Caco-2 (cell line): ENCODE measurements at regions of chr13 and their contacts with region 1.

Region 1: DNA sequence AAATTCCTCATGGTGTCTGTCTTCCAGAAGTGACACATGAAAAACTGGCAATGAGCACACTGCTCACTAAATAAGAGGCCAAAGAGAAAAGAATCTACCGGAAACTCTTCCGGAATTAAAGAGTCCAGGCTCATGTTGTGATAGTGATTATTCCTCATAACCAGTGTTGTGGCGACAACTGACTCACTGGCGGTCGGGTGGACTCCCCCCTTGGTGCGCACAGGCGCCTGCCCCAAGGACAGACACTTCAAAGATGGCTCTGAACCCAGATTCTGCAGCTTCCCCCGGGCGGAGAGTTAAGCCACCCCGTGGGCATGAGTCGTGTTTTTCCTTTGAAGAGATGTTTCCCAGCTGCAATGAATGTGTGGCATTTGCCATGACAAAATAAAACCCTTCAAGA is 10.3 kb downstream of the IL17D start:
- DNase-seq: no peak
- H3K4me3 ChIP-seq: no peak overlapping the region
- H3K4me3 Mint-ChIP-seq: no peak overlapping the region
- H3K27ac Mint-ChIP-seq: no peak overlapping the region
- H3K4me1 ChIP-seq: peaks cover 8% of the 10 kb centered on the region; the same call in 1 of the 2 replicates
- H3K4me1 Mint-ChIP-seq: no peaks in the 10 kb centered on the region
- H3K27me3 ChIP-seq: no peaks in the 10 kb centered on the region
- H3K27me3 Mint-ChIP-seq: no peaks in the 10 kb centered on the region
- CTCF ChIP-seq: no peak

Region 2: DNA sequence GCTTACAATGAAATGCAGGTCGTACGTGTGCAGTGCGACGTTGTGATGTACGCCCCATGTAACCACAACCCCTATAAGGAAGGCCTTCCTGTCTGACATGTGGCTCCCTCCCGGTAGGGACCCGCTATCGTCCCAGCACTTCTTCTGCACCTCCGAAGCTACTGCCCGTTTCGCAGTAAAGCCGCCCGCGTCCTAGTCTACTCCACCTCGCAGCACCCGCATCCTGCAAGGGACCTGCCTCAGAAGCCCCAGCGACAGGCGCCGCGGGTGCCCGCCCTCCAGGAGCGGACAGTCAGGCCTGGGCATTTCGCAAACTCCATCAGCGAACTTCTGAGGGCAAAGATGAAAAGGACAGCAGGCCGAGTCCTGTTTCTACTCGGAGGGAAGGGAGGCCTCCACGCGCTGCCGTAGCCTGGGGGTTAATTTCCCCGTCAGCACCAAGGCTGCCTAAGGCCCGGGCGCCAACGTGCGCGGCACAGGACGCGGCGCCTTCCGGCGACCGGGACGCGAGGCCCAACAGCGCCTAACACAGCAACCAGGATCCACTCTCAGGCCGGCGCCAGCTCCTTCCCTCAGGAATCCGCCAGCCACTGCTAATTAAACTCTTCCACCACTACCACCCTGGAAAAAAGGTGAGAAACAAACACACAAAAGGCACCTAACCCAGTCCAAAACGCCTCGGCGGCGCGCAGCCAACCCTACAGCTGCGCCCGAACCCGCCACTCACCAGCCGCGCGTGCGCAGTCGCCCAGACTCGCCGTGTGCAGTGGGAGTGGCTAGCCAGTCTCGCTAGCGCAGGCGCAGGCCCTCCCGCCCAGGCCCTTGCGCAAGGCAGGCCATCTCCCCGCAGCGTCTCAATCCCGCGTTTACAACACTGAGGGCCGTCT is 59.7 kb after region 1 on chr13 and contains the start of gene EEF1AKMT1:
- CTCF ChIA-PET with region 1: no interaction called
- POLR2A ChIA-PET with region 1: no interaction called
- intact Hi-C with region 1: loop called (anchors 1 kb)
- DNase-seq: peak; percentile 95 to 98
- H3K4me3 ChIP-seq: peak within 1 kb of the TSS; percentile 58
- H3K4me3 Mint-ChIP-seq: peak within 1 kb of the TSS; percentile 87
- H3K27ac Mint-ChIP-seq: peak within 1 kb of the TSS; percentile 97
- H3K4me1 ChIP-seq: peaks cover 9% of the 10 kb centered on the region
- H3K4me1 Mint-ChIP-seq: peaks cover 16% of the 10 kb centered on the region
- H3K27me3 ChIP-seq: no peaks in the 10 kb centered on the region
- H3K27me3 Mint-ChIP-seq: no peaks in the 10 kb centered on the region
- CTCF ChIP-seq: no peak
- total RNA-seq, gene EEF1AKMT1: 8.6 and 9.6 TPM in 2 replicates

Region 3: DNA sequence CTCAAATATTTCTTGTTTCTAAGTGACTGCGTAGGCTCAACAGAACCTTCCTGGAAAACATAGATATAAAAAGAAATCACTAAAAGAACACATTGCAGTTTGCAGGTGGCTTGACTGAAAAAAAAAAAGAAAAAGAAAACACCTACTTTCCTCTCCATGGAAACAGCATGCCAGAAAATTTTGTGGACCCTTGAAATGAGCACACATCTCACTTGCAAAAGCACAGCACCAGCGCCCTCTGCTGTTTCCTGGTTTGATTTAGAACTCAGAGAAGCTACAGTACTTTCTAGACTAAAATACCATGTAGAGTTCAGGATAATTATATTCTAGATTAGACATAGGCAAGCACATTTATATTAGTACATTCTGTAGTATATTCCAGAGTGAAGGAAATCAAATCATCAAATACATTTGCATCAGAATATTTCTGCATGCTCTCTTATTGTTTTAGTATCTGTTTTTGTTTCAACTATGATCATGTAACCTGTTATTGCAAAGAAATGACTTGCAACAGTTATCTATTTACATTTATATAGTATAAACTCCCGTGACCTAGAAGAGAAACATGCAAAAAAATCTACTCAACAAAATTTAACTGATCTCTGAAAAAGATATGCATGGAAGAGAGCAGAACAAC is 211.1 kb after region 1 on chr13:
- CTCF ChIA-PET with region 1: interaction called, 3 read pairs
- POLR2A ChIA-PET with region 1: no interaction called
- intact Hi-C with region 1: loop called (anchors 1 kb)
- DNase-seq: peak; percentile 87 to 88
- H3K4me3 ChIP-seq: no peak overlapping the region
- H3K4me3 Mint-ChIP-seq: no peak overlapping the region
- H3K27ac Mint-ChIP-seq: no peak overlapping the region
- H3K4me1 ChIP-seq: no peaks in the 10 kb centered on the region
- H3K4me1 Mint-ChIP-seq: peaks cover 9% of the 10 kb centered on the region
- H3K27me3 ChIP-seq: no peaks in the 10 kb centered on the region
- H3K27me3 Mint-ChIP-seq: no peaks in the 10 kb centered on the region
- CTCF ChIP-seq: peak; percentile 78 to 91

Region 4: DNA sequence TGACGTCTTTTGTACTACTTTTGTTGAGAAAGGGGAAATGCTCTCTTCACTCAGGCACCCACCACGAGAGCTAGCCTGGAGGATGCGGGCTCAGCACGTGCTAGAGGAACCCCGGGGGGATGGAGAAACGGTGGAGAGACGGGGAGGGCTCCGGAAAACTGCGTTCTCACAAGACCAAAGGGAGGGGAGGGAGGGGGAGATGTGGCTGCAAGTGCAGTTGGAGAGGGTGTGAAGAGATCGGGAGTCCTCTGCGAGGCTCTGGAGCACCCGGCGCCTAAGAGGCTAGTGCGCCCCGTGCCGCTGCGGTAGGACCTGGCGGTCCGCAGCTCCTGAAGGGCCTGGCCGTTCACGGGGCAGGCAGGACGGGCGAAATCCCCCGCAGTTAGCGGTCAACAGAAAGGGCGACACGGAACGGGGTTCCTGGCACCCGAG is 232.2 kb after region 1 on chr13:
- CTCF ChIA-PET with region 1: no interaction called
- POLR2A ChIA-PET with region 1: no interaction called
- intact Hi-C with region 1: no loop called
- DNase-seq: no peak
- H3K4me3 ChIP-seq: no peak overlapping the region
- H3K4me3 Mint-ChIP-seq: no peak overlapping the region
- H3K27ac Mint-ChIP-seq: no peak overlapping the region
- H3K4me1 ChIP-seq: peaks cover 22% of the 10 kb centered on the region
- H3K4me1 Mint-ChIP-seq: peaks cover 30% of the 10 kb centered on the region
- H3K27me3 ChIP-seq: no peaks in the 10 kb centered on the region
- H3K27me3 Mint-ChIP-seq: no peaks in the 10 kb centered on the region
- CTCF ChIP-seq: no peak